Posterior cingulate gyrus (tissue), 11 donors: ENCODE measurements at regions of chr5 and their contacts with region 1.

Region 1: GRCh38 chr5:174951146-174951780 is 226.9 kb downstream of the MSX2 start:
- DNase-seq: peak in 9 of 10 donors; percentile 24 to 95 (median 72)

Region 2: GRCh38 chr5:174990909-174991308 is 39.6 kb after region 1 on chr5:
- intact Hi-C with region 1: no loop called
- DNase-seq: no peak

Region 3: DNA sequence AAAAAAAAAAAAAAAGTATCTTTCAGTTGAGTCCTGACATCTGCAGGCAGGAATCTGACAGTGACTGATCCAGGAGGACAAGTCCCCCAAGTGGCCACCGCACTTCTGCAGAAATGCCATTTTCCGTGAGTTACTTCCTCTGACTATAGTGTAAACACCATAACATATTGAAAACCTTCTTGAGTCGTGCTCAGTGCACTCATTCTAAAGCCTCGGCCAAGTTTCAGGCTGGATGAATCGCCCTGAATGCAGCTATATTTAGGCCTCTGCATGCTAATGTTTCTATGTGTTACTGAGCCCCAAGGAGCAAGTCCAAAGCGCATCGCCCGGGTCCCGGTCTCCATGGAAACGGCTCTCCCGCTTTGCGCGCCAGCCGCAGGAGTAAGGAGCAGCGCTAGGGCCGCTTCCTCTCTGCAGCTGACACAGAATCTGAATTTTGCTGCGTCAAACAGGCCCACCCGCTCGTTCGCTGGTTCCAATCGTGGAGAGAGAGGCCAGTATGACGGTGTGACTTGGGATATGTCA is 108.5 kb after region 1 on chr5:
- intact Hi-C with region 1: loop called (anchors 2 kb)
- DNase-seq: peak; percentile 58 to 98 (median 88)

Region 4: GRCh38 chr5:175378444-175379028 is 427.3 kb after region 1 on chr5:
- intact Hi-C with region 1: no loop called
- DNase-seq: no peak

Region 5: GRCh38 chr5:175444060-175444904 is 493.0 kb after region 1 on chr5 and contains the start of gene DRD1:
- intact Hi-C with region 1: loop called (anchors 1 kb)
- DNase-seq: peak in 8 of 10 donors; percentile 45 to 94 (median 70)

Region 6: DNA sequence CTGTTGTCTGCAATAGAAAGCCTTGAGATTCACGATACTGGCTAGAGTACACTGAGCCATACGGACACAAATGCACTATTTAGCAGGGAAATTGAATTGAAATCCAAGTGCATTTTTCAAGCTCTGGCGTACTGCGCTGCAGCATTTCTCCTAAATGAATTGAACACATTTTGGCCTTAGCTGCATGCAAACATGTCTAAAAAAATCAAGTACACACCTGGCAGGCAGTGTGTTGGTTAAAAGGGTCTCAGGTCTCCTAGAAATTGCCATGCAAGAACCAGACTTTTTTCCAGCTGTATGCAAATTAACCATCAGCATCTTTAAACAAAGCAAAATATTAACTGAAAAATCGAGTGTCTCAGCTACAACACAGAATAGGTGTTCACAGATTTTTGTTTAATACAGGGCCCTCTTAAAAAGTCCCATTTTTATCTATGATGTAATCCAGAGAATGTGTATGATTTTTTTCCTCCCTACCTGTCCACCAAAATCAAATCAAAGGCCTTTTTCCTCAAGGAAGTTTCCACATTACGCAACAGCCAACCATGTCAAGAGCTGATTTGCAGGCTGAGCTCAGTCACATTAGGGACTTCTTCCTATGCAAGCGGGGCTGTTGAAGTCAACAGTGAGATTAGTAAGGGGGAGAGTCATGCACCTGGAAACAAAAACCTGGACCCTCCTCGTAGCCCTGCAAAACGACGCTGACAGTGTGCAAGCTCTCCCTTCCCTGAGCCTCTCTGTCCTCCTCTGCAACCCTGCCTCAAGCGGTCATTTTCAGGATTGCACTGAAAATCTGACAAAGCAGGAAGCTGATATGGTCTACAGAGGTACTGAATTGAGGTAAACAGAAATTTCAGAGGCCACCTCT is 513.0 kb after region 1 on chr5:
- intact Hi-C with region 1: loop called (anchors 5 kb)
- DNase-seq: peak in 6 of 10 donors; percentile 24 to 81 (median 60)